ENCODE measurements at regions of chr18 and their contacts with region 1.

Region 1: DNA sequence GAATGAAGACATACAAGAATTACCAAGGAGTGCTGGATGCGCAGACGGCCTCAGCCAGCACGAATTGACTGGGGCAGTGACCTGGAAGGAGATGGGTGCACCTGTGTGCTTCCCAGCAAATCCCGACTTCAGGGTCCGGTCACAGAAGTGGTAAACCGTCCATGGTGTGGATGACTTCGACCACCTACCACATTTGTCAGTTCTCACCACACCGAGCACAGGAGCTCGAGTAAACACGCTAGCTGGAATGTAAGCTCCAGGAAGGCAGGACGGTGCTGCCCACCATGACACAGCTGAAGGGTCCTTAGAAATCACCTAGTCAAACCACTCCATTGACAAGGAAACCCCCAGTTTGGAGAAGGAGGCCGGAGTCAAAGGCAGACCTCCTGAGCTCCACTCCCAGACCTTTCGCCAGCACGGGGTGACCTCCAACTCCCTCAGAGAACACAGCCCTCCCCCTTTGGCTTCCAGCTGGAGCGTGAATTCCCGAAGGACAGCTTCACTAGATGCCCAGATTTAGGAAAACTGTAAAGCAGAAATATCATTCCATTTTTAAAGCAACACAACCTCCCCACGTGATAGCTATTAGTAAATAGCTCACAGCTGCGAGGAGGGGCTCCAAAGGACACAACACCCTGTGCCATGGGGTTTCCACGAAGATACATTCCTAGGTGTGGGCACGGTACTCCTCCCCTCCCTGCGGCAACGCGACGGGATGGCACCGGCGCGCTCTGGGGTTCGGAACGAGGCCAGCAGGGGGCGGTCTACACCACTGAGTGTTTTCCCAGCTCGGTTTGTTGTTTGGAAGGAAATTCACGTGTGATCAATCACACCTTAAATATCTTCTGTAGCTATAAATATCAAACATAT is 34.1 kb upstream of the GNAL start:
- DNase-seq: peak; percentile 45 to 67
- ATAC-seq: peak in 7 of 8 donors; percentile 55 to 80 (median 64)
- H3K4me3 ChIP-seq: no peak overlapping the region
- H3K27ac ChIP-seq: no peak overlapping the region
- H3K4me1 ChIP-seq: peaks cover 0 to 7% (median 0%) of the 10 kb centered on the region in 9 donors
- H3K27me3 ChIP-seq: peaks cover 0 to 38% (median 23%) of the 10 kb centered on the region in 7 donors
- CTCF ChIP-seq: peak; percentile 48 to 81 (median 75)

Region 2: DNA sequence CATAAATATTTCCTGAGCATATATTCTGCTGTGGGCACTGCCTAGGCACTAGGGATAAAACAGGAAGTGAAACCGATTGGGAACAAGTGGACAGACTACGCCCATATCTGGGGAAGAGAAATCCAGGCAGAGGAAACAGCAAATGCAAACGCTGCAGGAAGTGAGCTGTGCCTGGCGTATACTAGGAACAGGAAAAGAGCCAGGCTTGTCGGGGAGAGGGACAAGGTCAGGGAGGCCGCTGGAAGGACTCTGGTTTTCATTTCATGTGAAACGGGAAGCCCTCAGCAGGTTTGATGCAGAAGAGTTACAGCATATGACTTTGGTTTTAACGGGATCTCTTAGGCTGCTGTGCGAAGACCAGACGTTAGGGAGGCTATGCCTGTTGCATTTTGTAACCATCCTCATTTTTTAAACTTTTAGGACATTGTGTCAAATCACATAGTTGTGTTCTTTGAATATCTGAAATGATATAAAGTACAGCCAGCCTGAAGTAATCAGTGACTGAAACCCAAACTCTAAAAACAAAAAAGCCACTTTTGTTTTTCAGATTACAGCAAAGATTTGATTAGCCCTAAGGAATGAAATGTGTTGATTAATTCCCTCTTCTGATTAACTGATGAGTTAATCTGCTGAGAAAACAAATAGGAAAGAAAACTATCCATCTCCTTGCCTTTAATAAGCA is 395.4 kb before region 1 on chr18:
- intact Hi-C with region 1: no loop called
- DNase-seq: peak; percentile 34 to 49
- ATAC-seq: peak; percentile 47 to 95 (median 82)
- H3K4me3 ChIP-seq: no peak overlapping the region
- H3K27ac ChIP-seq: peak overlapping the region in 1 of 10 donors; percentile 34
- H3K4me1 ChIP-seq: peaks cover 0 to 8% (median 0%) of the 10 kb centered on the region in 9 donors
- H3K27me3 ChIP-seq: no peaks in the 10 kb centered on the region
- CTCF ChIP-seq: no peak

Region 3: GRCh38 chr18:11857177-11857887 is 202.4 kb after region 1 on chr18:
- intact Hi-C with region 1: loop called in 1 of 10 experiments (anchors 10 kb)
- DNase-seq: peak; percentile 34 to 51
- ATAC-seq: peak; percentile 44 to 96 (median 80)
- H3K4me3 ChIP-seq: peak overlapping the region in 3 of 10 donors; percentile 13 to 16 (median 14)
- H3K27ac ChIP-seq: peak overlapping the region in 9 of 10 donors; percentile 9 to 83 (median 72)
- H3K4me1 ChIP-seq: peaks cover 0 to 73% (median 24%) of the 10 kb centered on the region in 9 donors
- H3K27me3 ChIP-seq: no peaks in the 10 kb centered on the region
- CTCF ChIP-seq: no peak

Region 4: DNA sequence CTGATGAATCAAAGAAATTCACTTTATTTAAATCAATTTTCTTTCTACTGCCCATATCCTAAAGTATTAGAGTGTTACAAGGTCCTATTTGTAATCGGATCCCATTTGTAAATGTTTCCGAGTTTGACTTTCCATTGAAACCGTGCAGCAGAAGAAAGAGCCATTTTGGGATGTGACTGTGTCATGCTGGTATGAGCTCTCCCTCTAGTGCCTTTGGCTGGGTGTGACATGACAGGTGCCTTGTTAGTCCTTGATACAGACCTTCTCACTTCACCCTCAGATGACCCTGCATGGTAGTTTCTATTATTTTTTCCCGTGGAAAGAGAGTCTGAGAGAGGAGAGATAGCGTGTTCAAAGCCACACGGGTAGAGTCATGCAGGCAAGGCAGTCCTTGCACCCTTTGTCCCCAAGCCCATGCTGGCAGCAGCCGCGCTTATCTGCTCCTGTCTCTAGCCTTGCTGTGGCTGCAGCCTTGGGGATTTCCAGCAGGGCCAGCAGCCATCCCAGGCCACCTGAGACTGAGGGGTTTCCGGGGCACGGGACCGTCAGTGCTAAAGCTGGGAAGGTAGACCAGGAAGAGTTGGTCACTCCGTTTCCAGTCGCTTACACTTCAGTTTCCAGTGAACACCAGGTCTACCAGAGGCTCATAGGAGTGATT is 217.6 kb after region 1 on chr18:
- intact Hi-C with region 1: loop called in 4 of 10 experiments (anchors 2 to 10 kb)
- DNase-seq: peak in 1 of 2 donors; percentile 41
- ATAC-seq: peak; percentile 82 to 97 (median 92)
- H3K4me3 ChIP-seq: no peak overlapping the region
- H3K27ac ChIP-seq: peak overlapping the region in 5 of 10 donors; percentile 12 to 65 (median 27)
- H3K4me1 ChIP-seq: peaks cover 0 to 4% (median 0%) of the 10 kb centered on the region in 9 donors
- H3K27me3 ChIP-seq: no peaks in the 10 kb centered on the region
- CTCF ChIP-seq: peak in 8 of 9 donors; percentile 18 to 63 (median 55)

Region 5: GRCh38 chr18:11995445-11996189 is 340.6 kb after region 1 on chr18:
- intact Hi-C with region 1: loop called in 1 of 10 experiments (anchors 5 kb)
- DNase-seq: peak; percentile 76 to 80
- ATAC-seq: peak; percentile 79 to 93 (median 88)
- H3K4me3 ChIP-seq: peak overlapping the region in 2 of 10 donors; percentile 5 to 7
- H3K27ac ChIP-seq: peak overlapping the region in 9 of 10 donors; percentile 20 to 77 (median 65)
- H3K4me1 ChIP-seq: peaks cover 6 to 56% (median 28%) of the 10 kb centered on the region in 9 donors
- H3K27me3 ChIP-seq: no peaks in the 10 kb centered on the region
- CTCF ChIP-seq: peak; percentile 67 to 90 (median 85)

Region 6: GRCh38 chr18:12236934-12237832 is 582.2 kb after region 1 on chr18:
- intact Hi-C with region 1: loop called in 2 of 10 experiments (anchors 5 to 10 kb)
- DNase-seq: peak; percentile 70 to 82
- ATAC-seq: peak; percentile 95 to 98 (median 96)
- H3K4me3 ChIP-seq: no peak overlapping the region
- H3K27ac ChIP-seq: no peak overlapping the region
- H3K4me1 ChIP-seq: peaks cover 0 to 7% (median 0%) of the 10 kb centered on the region in 9 donors
- H3K27me3 ChIP-seq: peaks cover 0 to 23% (median 7%) of the 10 kb centered on the region in 7 donors
- CTCF ChIP-seq: peak; percentile 80 to 93 (median 89)

Measured in heart right ventricle (tissue), 16 donors.